Posterior vena cava (tissue), 2 donors: ENCODE measurements at regions of chr9 and their contacts with region 1.

Region 1: GRCh38 chr9:94213511-94214124 is 45.5 kb upstream of the ZNF169 start:
- DNase-seq: peak; percentile 88

Region 2: DNA sequence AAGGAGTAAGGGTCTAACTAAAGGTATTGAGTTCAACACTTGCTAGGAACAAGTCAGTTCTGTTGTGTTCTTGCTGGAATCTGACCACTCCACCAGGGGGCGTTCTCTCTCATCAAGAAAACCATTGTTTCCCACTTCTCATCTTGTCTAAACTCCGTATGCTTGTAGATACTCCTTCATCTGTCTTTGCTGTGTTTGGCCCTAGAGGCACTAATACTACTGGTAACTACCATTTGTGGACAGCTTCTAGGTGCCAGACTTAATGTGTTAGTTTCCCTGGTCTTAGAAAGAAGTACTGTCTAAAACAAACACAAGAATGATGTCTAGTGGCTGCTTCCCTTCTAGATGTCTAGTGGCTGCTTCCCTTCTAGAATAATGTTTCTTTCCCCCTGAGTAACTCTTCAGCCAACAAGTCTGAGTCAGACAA is 148.1 kb before region 1 on chr9:
- intact Hi-C with region 1: loop called (anchors 2 to 5 kb)
- DNase-seq: no peak

Region 3: GRCh38 chr9:94528886-94529285 is 315.3 kb after region 1 on chr9:
- intact Hi-C with region 1: no loop called
- DNase-seq: no peak